ENCODE measurements at regions of chr6 and their contacts with region 1.

Region 1: GRCh38 chr6:29942275-29943052 is at the start of gene HLA-A:
- DNase-seq: peak; percentile 86 to 98 (median 94)
- ATAC-seq: peak; percentile 84
- H3K4me3 ChIP-seq: peak within 1 kb of the TSS; percentile 75 to 82
- H3K4me3 Mint-ChIP-seq: peak within 1 kb of the TSS; percentile 94
- H3K27ac ChIP-seq: peak within 1 kb of the TSS; percentile 99 to 100
- H3K27ac Mint-ChIP-seq: peak within 1 kb of the TSS; percentile 100
- H3K4me1 ChIP-seq: peaks cover 49% of the 10 kb centered on the region
- H3K4me1 Mint-ChIP-seq: peaks cover 48% of the 10 kb centered on the region
- H3K27me3 ChIP-seq: no peaks in the 10 kb centered on the region
- H3K27me3 Mint-ChIP-seq: no peaks in the 10 kb centered on the region
- CTCF ChIP-seq: no peak
- total RNA-seq, gene HLA-A: 2,151 to 2,183 TPM

Region 2: DNA sequence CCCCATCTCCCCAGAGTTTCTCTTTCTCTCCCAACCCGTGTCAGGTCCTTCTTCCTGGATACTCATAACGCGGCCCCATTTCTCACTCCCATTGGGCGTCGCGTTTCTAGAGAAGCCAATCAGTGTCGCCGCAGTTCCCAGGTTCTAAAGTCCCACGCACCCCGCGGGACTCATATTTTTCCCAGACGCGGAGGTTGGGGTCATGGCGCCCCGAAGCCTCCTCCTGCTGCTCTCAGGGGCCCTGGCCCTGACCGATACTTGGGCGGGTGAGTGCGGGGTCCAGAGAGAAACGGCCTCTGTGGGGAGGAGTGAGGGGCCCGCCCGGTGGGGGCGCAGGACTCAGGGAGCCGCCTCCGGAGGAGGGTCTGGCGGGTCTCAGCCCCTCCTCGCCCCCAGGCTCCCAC is 219.2 kb before region 1 on chr6 and contains the start of gene HLA-F:
- CTCF ChIA-PET with region 1: no interaction called
- POLR2A ChIA-PET with region 1: no interaction called
- intact Hi-C with region 1: loop called (anchors 5 kb)
- DNase-seq: peak; percentile 69 to 98 (median 85)
- ATAC-seq: peak; percentile 77
- H3K4me3 ChIP-seq: peak within 1 kb of the TSS; percentile 98
- H3K4me3 Mint-ChIP-seq: peak within 1 kb of the TSS; percentile 93
- H3K27ac ChIP-seq: peak within 1 kb of the TSS; percentile 88 to 100
- H3K27ac Mint-ChIP-seq: peak within 1 kb of the TSS; percentile 97
- H3K4me1 ChIP-seq: peaks cover 48% of the 10 kb centered on the region
- H3K4me1 Mint-ChIP-seq: peaks cover 56% of the 10 kb centered on the region
- H3K27me3 ChIP-seq: no peaks in the 10 kb centered on the region
- H3K27me3 Mint-ChIP-seq: no peaks in the 10 kb centered on the region
- CTCF ChIP-seq: no peak
- total RNA-seq, gene HLA-F: 378 to 382 TPM

Region 3: DNA sequence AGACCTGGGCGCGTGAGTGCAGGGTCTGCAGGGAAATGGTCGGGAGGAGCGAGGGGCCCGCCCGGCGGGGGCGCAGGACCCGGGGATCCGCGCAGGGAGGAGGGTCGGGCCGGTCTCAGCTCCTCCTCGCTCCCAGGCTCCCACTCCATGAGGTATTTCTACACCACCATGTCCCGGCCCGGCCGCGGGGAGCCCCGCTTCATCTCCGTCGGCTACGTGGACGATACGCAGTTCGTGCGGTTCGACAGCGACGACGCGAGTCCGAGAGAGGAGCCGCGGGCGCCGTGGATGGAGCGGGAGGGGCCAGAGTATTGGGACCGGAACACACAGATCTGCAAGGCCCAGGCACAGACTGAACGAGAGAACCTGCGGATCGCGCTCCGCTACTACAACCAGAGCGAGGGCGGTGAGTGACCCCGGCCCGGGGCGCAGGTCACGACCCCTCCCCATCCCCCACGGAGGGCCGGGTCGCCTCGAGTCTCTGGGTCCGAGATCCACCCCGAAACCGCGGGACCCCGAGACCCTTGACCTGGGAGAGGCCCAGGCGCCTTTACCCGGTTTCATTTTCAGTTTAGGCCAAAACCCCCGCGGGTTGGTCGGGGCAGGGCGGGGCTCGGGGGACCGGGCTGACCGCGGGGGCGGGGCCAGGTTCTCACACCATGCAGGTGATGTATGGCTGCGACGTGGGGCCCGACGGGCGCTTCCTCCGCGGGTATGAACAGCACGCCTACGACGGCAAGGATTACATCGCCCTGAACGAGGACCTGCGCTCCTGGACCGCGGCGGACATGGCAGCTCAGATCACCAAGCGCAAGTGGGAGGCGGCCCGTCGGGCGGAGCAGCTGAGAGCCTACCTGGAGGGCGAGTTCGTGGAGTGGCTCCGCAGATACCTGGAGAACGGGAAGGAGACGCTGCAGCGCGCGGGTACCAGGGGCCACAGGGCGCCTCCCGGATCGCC is 54.4 kb before region 1 on chr6:
- CTCF ChIA-PET with region 1: no interaction called
- POLR2A ChIA-PET with region 1: no interaction called
- intact Hi-C with region 1: loop called in 1 of 2 experiments (anchors 1 kb)
- DNase-seq: peak; percentile 79 to 94 (median 85)
- ATAC-seq: peak; percentile 86
- H3K4me3 ChIP-seq: peak overlapping the region; percentile 72 to 83
- H3K4me3 Mint-ChIP-seq: peak overlapping the region; percentile 85
- H3K27ac ChIP-seq: peak overlapping the region; percentile 91 to 97
- H3K27ac Mint-ChIP-seq: peak overlapping the region; percentile 88
- H3K4me1 ChIP-seq: peaks cover 10% of the 10 kb centered on the region
- H3K4me1 Mint-ChIP-seq: peaks cover 8% of the 10 kb centered on the region
- H3K27me3 ChIP-seq: no peaks in the 10 kb centered on the region
- H3K27me3 Mint-ChIP-seq: no peaks in the 10 kb centered on the region
- CTCF ChIP-seq: no peak

Region 4: DNA sequence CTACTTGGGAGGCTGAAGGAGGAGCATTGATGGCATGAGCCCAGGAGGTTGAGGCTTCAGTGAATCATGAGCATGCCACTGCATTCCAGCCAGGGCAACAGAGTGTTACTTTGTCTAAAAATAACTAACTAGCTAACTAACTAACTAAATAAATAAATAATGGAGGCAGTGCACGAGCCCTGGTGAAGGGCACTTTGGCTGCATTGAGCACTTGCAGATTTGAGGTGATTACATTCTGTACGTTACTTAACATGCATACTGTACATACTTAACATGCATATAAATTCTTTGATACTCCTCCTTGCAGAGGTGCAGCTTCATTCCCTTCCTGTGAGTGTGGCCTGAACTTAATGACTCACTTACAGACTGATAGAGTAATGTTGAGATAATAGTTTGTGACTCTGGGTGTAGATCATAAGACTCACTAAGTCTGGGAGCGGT is 10.6 kb after region 1 on chr6:
- CTCF ChIA-PET with region 1: no interaction called
- POLR2A ChIA-PET with region 1: no interaction called
- intact Hi-C with region 1: no loop called
- DNase-seq: no peak
- ATAC-seq: no peak
- H3K4me3 ChIP-seq: no peak overlapping the region
- H3K4me3 Mint-ChIP-seq: no peak overlapping the region
- H3K27ac ChIP-seq: no peak overlapping the region
- H3K27ac Mint-ChIP-seq: no peak overlapping the region
- H3K4me1 ChIP-seq: peaks cover 21% of the 10 kb centered on the region
- H3K4me1 Mint-ChIP-seq: peaks cover 40% of the 10 kb centered on the region
- H3K27me3 ChIP-seq: no peaks in the 10 kb centered on the region
- H3K27me3 Mint-ChIP-seq: no peaks in the 10 kb centered on the region
- CTCF ChIP-seq: no peak

Region 5: DNA sequence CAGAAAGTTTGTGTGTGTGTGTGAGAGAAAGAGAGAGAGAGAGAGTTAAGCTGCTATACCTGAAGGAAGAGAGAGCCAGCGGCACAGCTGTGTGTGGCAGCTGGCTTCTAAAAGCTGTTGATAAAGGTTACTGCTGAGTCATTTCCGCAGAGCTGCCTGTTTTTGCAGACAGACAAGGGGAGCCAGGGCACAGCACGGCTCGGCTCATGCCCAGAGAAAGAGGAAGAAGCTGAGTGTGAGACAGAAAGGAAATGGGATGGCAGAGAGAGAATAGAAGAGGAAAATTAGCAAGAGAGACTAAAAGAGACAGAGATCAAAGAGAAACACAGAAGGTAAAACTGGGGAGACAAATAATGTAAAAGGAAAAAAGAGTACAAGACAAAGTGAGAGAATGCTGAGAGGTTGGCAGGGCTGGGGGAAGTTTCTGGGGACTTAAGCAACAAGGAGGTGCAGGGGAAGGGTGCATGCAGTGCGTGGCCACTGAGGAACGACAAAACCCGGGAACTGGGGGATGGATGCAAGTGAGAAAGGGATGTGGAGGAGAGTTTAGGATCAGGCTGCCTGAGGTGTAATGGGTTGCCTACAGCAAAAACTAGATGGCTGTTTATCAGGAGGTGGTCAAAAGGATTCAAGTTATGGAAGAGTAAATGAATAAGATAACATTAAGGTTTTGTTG is 22.6 kb after region 1 on chr6:
- CTCF ChIA-PET with region 1: interaction called, 3 read pairs
- POLR2A ChIA-PET with region 1: interaction called, 12 read pairs
- intact Hi-C with region 1: no loop called
- DNase-seq: peak; percentile 55 to 93 (median 74)
- ATAC-seq: peak; percentile 94
- H3K4me3 ChIP-seq: peak overlapping the region; percentile 22 to 44
- H3K4me3 Mint-ChIP-seq: peak overlapping the region; percentile 67
- H3K27ac ChIP-seq: peak overlapping the region; percentile 29 to 82
- H3K27ac Mint-ChIP-seq: peak overlapping the region; percentile 73
- H3K4me1 ChIP-seq: peaks cover 30% of the 10 kb centered on the region
- H3K4me1 Mint-ChIP-seq: peaks cover 25% of the 10 kb centered on the region
- H3K27me3 ChIP-seq: no peaks in the 10 kb centered on the region
- H3K27me3 Mint-ChIP-seq: no peaks in the 10 kb centered on the region
- CTCF ChIP-seq: no peak

Region 6: DNA sequence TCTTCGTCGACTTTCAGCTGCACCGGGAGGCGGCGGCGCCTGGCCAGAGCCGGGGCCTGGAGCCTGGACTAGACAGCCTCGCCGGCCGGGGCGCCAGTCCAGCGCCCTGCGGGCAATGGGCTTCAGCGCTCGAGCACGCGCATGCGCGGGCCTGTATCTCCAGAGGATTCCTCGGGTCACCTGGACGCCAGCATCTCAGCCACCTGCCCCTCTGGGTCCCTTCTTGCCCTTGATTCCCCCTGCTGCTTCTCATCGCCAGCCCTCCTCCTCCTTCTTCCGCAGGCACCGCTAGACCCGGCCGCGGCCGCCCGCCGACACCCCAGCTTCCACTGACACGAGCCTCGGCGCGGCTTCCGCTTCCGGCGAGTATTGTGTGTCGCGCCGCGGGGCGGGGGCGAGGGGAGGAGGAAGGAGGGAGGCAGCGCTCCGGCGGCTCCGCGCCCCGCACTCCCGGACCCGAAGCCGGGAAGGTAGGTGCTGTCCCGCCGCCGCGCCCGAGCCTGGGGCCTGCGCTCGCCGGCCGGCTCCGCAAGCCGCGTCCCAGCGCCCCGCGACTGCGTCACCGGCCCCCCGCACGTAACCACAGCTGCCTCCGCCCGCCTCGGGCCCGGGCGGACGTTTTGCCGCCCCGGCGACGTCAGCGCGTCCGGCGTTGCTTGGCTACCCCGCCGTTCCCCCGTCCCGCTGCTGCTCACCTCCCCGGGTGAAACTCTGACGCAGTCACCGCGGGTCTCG is 384.2 kb after region 1 on chr6 and contains the start of gene TRIM39:
- CTCF ChIA-PET with region 1: no interaction called
- POLR2A ChIA-PET with region 1: no interaction called
- intact Hi-C with region 1: loop called in 1 of 2 experiments (anchors 5 kb)
- DNase-seq: peak; percentile 75 to 97 (median 90)
- ATAC-seq: peak; percentile 58
- H3K4me3 ChIP-seq: peak within 1 kb of the TSS; percentile 74 to 87
- H3K4me3 Mint-ChIP-seq: peak within 1 kb of the TSS; percentile 96
- H3K27ac ChIP-seq: peak within 1 kb of the TSS; percentile 95 to 99
- H3K27ac Mint-ChIP-seq: peak within 1 kb of the TSS; percentile 98
- H3K4me1 ChIP-seq: peaks cover 41% of the 10 kb centered on the region
- H3K4me1 Mint-ChIP-seq: peaks cover 59% of the 10 kb centered on the region
- H3K27me3 ChIP-seq: no peaks in the 10 kb centered on the region
- H3K27me3 Mint-ChIP-seq: no peaks in the 10 kb centered on the region
- CTCF ChIP-seq: no peak
- total RNA-seq, gene TRIM39: 50.7 to 58.5 TPM